ENCODE measurements at regions of chr20 and their contacts with region 1.

Region 1: DNA sequence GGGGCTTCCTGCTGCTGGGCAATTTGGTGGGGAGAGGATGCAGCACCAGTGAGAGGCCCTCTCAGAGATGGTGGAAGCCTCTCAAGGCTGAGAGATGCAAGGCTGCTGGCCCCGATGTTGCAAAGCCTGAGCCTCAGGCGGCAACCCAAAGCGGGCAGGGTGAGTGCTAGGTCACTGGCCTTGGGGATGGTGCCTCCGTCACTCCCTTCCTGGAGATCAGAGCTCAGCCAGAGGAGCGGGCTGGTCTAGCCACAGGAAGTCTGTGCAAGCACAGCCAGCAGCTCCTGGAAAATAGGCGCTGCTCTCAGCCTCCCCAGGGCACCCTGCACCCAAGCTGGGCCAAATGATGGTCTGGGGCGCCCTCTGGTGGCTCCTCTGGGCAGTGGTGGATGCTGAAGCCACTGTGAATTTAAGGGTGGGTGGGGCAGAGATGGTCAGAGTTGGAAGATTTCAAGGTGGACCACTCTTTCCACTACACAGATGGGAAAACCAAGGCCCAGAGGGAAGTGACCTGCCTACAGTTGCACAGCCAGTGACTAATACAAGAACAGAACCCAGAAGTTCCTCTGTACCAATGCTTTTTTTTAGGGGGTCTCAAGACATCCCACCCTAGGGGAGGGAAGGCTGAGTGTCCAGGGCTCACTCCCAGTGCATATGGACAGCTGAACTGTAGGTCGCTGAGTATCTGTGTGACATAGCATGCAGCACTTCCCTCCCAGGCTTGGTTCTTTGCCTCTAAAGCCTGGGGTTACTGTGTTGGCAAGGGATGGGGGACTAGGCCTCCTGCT is 20.8 kb downstream of the C20orf203 start:
- DNase-seq: peak; percentile 80 to 87 (median 84)
- H3K4me3 ChIP-seq: no peak overlapping the region
- H3K4me3 Mint-ChIP-seq: peak overlapping the region in 6 of 8 donors; percentile 30 to 62 (median 50)
- H3K27ac ChIP-seq: no peak overlapping the region
- H3K27ac Mint-ChIP-seq: peak overlapping the region in 2 of 7 donors; percentile 10 to 36
- H3K4me1 ChIP-seq: peaks cover 10% of the 10 kb centered on the region
- H3K4me1 Mint-ChIP-seq: peaks cover 5 to 10% (median 6%) of the 10 kb centered on the region in 4 donors
- H3K27me3 ChIP-seq: no peaks in the 10 kb centered on the region
- H3K27me3 Mint-ChIP-seq: no peaks in the 10 kb centered on the region

Region 2: GRCh38 chr20:31849455-31849925 is 803.4 kb before region 1 on chr20:
- CTCF ChIA-PET with region 1: interaction called, 6 read pairs
- POLR2A ChIA-PET with region 1: no interaction called
- intact Hi-C with region 1: loop called (anchors 1 kb)
- DNase-seq: no peak
- H3K4me3 ChIP-seq: no peak overlapping the region
- H3K4me3 Mint-ChIP-seq: no peak overlapping the region
- H3K27ac ChIP-seq: no peak overlapping the region
- H3K27ac Mint-ChIP-seq: no peak overlapping the region
- H3K4me1 ChIP-seq: no peaks in the 10 kb centered on the region
- H3K4me1 Mint-ChIP-seq: no peaks in the 10 kb centered on the region
- H3K27me3 ChIP-seq: no peaks in the 10 kb centered on the region
- H3K27me3 Mint-ChIP-seq: peaks cover 11 to 21% of the 10 kb centered on the region in 2 donors

Region 3: DNA sequence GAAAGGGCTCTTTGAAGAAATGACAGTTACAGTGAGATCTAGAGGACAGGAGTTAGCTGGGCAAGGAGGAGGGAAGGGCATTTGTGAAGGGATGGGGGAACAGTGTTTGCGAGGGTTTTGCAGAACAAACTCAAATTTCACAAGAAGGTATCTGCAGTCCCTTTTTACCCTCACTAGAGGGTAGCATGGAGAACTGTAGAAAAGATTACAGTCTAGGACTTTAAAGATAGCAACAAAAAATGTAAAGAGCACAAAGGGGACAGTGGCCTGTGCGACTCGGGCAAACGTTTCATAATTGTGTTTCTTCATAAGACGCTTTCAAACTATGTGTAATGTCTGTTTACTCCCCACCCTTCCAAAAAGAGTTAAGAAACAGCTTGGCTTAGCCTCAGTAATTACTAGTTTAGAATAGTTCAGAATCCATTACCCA is 316.0 kb before region 1 on chr20:
- CTCF ChIA-PET with region 1: interaction called, 3 read pairs
- POLR2A ChIA-PET with region 1: no interaction called
- intact Hi-C with region 1: loop called (anchors 2 kb)
- DNase-seq: peak in 1 of 5 donors; percentile 13
- H3K4me3 ChIP-seq: no peak overlapping the region
- H3K4me3 Mint-ChIP-seq: no peak overlapping the region
- H3K27ac ChIP-seq: no peak overlapping the region
- H3K27ac Mint-ChIP-seq: peak overlapping the region in 2 of 7 donors; percentile 7 to 17
- H3K4me1 ChIP-seq: peaks cover 27% of the 10 kb centered on the region
- H3K4me1 Mint-ChIP-seq: peaks cover 21 to 36% (median 26%) of the 10 kb centered on the region in 4 donors
- H3K27me3 ChIP-seq: no peaks in the 10 kb centered on the region
- H3K27me3 Mint-ChIP-seq: no peaks in the 10 kb centered on the region

Region 4: DNA sequence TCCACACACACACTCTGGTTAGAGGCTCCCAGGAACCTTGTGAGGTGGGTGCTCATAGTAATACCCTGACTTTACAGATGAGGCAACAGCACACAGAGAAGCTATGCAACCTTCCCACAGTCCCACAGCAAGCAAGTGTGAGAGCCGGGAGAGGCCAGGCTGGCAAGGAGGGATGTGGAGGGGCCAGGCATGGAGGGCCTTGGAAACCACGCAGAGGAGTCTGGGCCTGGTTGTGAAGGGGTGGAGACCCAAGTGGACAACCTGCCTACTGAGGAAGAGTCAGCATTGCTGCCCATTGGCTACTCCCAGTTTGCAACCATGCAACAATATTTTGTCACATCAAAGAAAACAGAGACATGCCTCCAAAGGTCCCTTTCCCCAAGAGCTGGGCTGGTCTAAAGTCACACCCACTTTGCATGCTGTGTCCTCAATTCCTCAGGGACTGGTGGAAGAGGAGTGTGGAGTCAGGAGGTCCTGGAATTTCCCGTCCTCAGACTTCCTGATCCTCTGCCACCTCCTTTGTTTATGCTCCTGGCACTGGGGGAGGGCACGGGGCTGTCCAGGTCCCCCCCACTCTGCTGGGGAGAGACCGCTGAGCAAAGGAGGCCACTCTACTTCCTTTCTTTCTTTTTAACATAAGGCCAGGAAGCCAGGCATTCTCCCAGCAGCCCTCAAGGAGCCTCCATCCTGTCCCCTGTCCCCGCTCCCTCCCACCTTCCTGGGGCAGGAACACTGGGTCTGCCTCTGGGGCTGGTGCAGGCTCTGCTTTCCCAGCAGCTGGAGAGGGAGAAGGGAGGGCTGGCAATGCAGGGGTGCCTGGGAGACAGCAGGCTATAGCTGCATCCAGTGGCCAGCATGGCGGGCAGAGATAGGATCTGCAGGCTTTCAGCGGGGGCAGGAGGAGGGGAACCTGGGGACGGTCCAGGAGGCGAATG is 136.1 kb before region 1 on chr20:
- CTCF ChIA-PET with region 1: interaction called, 312 read pairs
- POLR2A ChIA-PET with region 1: interaction called, 43 read pairs
- intact Hi-C with region 1: loop called (anchors 1 kb)
- DNase-seq: no peak
- H3K4me3 ChIP-seq: no peak overlapping the region
- H3K4me3 Mint-ChIP-seq: no peak overlapping the region
- H3K27ac ChIP-seq: no peak overlapping the region
- H3K27ac Mint-ChIP-seq: peak overlapping the region; percentile 9 to 90 (median 63)
- H3K4me1 ChIP-seq: peaks cover 39% of the 10 kb centered on the region
- H3K4me1 Mint-ChIP-seq: peaks cover 37 to 68% (median 54%) of the 10 kb centered on the region in 4 donors
- H3K27me3 ChIP-seq: no peaks in the 10 kb centered on the region
- H3K27me3 Mint-ChIP-seq: no peaks in the 10 kb centered on the region

Region 5: GRCh38 chr20:32535953-32536823 is 116.7 kb before region 1 on chr20:
- CTCF ChIA-PET with region 1: interaction called, 38 read pairs
- POLR2A ChIA-PET with region 1: interaction called, 29 read pairs
- intact Hi-C with region 1: loop called (anchors 5 kb)
- DNase-seq: peak; percentile 85 to 94 (median 88)
- H3K4me3 ChIP-seq: peak overlapping the region; percentile 18 to 57
- H3K4me3 Mint-ChIP-seq: peak overlapping the region; percentile 78 to 94 (median 86)
- H3K27ac ChIP-seq: peak overlapping the region; percentile 77
- H3K27ac Mint-ChIP-seq: peak overlapping the region; percentile 95 to 99 (median 97)
- H3K4me1 ChIP-seq: peaks cover 90% of the 10 kb centered on the region
- H3K4me1 Mint-ChIP-seq: peaks cover 61 to 91% (median 77%) of the 10 kb centered on the region in 4 donors
- H3K27me3 ChIP-seq: no peaks in the 10 kb centered on the region
- H3K27me3 Mint-ChIP-seq: no peaks in the 10 kb centered on the region

Region 6: GRCh38 chr20:32603046-32603726 is 49.7 kb before region 1 on chr20:
- CTCF ChIA-PET with region 1: no interaction called
- POLR2A ChIA-PET with region 1: no interaction called
- intact Hi-C with region 1: loop called (anchors 5 kb)
- DNase-seq: no peak
- H3K4me3 ChIP-seq: no peak overlapping the region
- H3K4me3 Mint-ChIP-seq: no peak overlapping the region
- H3K27ac ChIP-seq: no peak overlapping the region
- H3K27ac Mint-ChIP-seq: no peak overlapping the region
- H3K4me1 ChIP-seq: no peaks in the 10 kb centered on the region
- H3K4me1 Mint-ChIP-seq: peaks cover 0 to 4% (median under 1%) of the 10 kb centered on the region in 4 donors
- H3K27me3 ChIP-seq: no peaks in the 10 kb centered on the region
- H3K27me3 Mint-ChIP-seq: no peaks in the 10 kb centered on the region